ENCODE measurements at regions of chr14 and their contacts with region 1.

Region 1: DNA sequence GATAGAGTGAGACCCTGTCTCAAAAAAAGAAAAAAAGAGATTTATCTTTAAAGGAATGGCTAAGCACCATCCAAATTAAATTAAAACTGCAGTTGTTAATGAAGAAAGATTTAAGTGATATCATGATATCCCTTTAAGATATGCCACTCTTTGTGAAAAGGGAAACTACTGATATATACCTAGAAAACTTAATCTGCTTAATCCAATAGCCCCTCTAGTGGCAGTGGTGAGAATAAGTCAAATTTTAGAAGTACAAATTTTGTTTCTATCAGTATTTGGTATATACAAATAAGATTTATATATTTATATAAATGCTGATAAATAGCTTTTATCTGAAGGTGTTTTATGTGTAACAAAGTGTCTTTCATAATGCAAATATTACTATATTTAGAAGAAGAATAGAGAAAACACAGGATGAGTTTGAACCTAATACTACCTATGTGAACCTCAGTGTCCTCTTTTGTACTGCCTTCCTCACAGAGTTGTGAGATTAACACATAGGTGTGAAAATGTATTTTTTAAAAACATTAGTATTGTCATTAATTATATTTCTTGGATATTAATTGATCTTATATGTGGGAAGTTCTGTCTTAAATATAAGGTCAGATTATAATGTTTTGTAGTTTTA is 51.4 kb upstream of the GARIN2 start:
- DNase-seq: no peak
- ATAC-seq: no peak
- H3K4me3 Mint-ChIP-seq: no peak overlapping the region
- H3K27ac Mint-ChIP-seq: no peak overlapping the region
- H3K4me1 Mint-ChIP-seq: peaks cover 28% of the 10 kb centered on the region
- H3K27me3 Mint-ChIP-seq: no peaks in the 10 kb centered on the region

Region 2: DNA sequence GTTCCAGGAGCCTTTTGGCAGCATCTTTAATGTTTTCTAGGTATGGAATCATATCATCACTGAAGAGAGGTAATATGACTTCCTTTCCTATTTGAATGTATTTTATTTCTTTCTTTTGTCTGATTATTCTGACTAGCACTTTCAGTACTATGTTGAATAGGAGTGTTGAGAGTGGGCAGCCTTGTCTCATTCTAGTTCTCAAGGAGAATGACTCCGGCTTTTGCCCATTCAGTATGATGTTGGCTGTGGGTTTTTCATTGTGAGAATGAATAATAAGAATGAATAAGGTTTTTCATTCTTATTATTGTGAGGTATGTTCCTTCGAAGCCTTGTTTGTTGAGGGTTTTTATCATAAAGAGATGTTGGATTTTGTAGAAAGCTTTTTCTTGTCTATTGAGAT is 531.0 kb before region 1 on chr14:
- CTCF ChIA-PET with region 1: no interaction called
- POLR2A ChIA-PET with region 1: no interaction called
- intact Hi-C with region 1: loop called (anchors 2 to 5 kb)
- DNase-seq: no peak
- ATAC-seq: peak; percentile 84
- H3K4me3 Mint-ChIP-seq: no peak overlapping the region
- H3K27ac Mint-ChIP-seq: no peak overlapping the region
- H3K4me1 Mint-ChIP-seq: peaks cover 34% of the 10 kb centered on the region
- H3K27me3 Mint-ChIP-seq: no peaks in the 10 kb centered on the region

Region 3: GRCh38 chr14:66979101-66979974 is 158.5 kb before region 1 on chr14:
- CTCF ChIA-PET with region 1: no interaction called
- POLR2A ChIA-PET with region 1: no interaction called
- intact Hi-C with region 1: loop called in 1 of 2 experiments (anchors 1 kb)
- DNase-seq: peak; percentile 17
- ATAC-seq: peak; percentile 75
- H3K4me3 Mint-ChIP-seq: no peak overlapping the region
- H3K27ac Mint-ChIP-seq: no peak overlapping the region
- H3K4me1 Mint-ChIP-seq: peaks cover 3% of the 10 kb centered on the region
- H3K27me3 Mint-ChIP-seq: no peaks in the 10 kb centered on the region

Region 4: GRCh38 chr14:67158566-67158965 is 20.7 kb after region 1 on chr14:
- CTCF ChIA-PET with region 1: interaction called, 3 read pairs
- POLR2A ChIA-PET with region 1: no interaction called
- intact Hi-C with region 1: loop called (anchors 1 kb)
- DNase-seq: no peak
- ATAC-seq: peak; percentile 95
- H3K4me3 Mint-ChIP-seq: no peak overlapping the region
- H3K27ac Mint-ChIP-seq: peak overlapping the region; percentile 51
- H3K4me1 Mint-ChIP-seq: peaks cover 12% of the 10 kb centered on the region
- H3K27me3 Mint-ChIP-seq: no peaks in the 10 kb centered on the region